Heart right ventricle (tissue), 16 donors: ENCODE measurements at regions of chr9 and their contacts with region 1.

Region 1: GRCh38 chr9:18616976-18617375 is 143.0 kb downstream of the ADAMTSL1 start:
- DNase-seq: no peak
- ATAC-seq: no peak
- H3K4me3 ChIP-seq: no peak overlapping the region
- H3K27ac ChIP-seq: no peak overlapping the region
- H3K4me1 ChIP-seq: peaks cover 0 to 17% (median 0%) of the 10 kb centered on the region in 9 donors
- H3K27me3 ChIP-seq: no peaks in the 10 kb centered on the region
- CTCF ChIP-seq: no peak

Region 2: GRCh38 chr9:18250053-18250452 is 366.9 kb before region 1 on chr9:
- intact Hi-C with region 1: loop called in 2 of 10 experiments (anchors 5 to 10 kb)
- DNase-seq: no peak
- ATAC-seq: no peak
- H3K4me3 ChIP-seq: no peak overlapping the region
- H3K27ac ChIP-seq: no peak overlapping the region
- H3K4me1 ChIP-seq: peaks cover 0 to 3% (median 0%) of the 10 kb centered on the region in 9 donors
- H3K27me3 ChIP-seq: no peaks in the 10 kb centered on the region
- CTCF ChIP-seq: no peak

Region 3: DNA sequence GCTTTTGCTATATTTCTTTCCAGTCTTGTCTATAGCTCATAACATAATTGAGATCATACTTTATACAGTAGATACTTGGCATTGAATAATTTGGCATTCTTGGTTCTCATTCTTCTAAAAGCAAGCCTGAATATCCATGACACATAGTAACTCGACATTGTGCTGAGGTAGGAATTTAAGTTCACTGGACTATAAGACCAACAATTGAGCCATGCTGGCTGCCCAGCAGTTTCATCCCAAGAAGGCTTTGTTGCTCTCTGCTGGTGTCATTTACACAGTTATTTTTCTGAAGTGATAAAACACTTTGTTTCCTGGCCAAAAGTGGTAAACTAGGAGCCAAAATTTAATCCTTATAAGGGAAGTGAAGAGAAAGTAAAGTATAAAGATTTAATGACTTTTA is 49.0 kb after region 1 on chr9:
- intact Hi-C with region 1: loop called in 1 of 10 experiments (anchors 1 kb)
- DNase-seq: no peak
- ATAC-seq: no peak
- H3K4me3 ChIP-seq: no peak overlapping the region
- H3K27ac ChIP-seq: no peak overlapping the region
- H3K4me1 ChIP-seq: no peaks in the 10 kb centered on the region
- H3K27me3 ChIP-seq: no peaks in the 10 kb centered on the region
- CTCF ChIP-seq: no peak